Heart right ventricle (tissue), 16 donors: ENCODE measurements at regions of chr9 and their contacts with region 1.

Region 1: GRCh38 chr9:128448746-128449145 is 7.1 kb upstream of the ODF2 start:
- DNase-seq: no peak
- ATAC-seq: no peak
- H3K4me3 ChIP-seq: no peak overlapping the region
- H3K27ac ChIP-seq: no peak overlapping the region
- H3K4me1 ChIP-seq: no peaks in the 10 kb centered on the region
- H3K27me3 ChIP-seq: no peaks in the 10 kb centered on the region
- CTCF ChIP-seq: no peak

Region 2: GRCh38 chr9:128504485-128505413 is 56.0 kb after region 1 on chr9 and contains the start of gene GLE1:
- intact Hi-C with region 1: loop called in 1 of 10 experiments (anchors 2 kb)
- DNase-seq: peak; percentile 94 to 98
- ATAC-seq: peak; percentile 99 to 100 (median 100)
- H3K4me3 ChIP-seq: peak within 1 kb of the TSS; percentile 49 to 99 (median 86)
- H3K27ac ChIP-seq: peak within 1 kb of the TSS in 9 of 10 donors; percentile 77 to 94 (median 84)
- H3K4me1 ChIP-seq: peaks cover 4 to 28% (median 24%) of the 10 kb centered on the region in 9 donors
- H3K27me3 ChIP-seq: no peaks in the 10 kb centered on the region
- CTCF ChIP-seq: no peak
- total RNA-seq, gene GLE1: 15.0 to 24.5 (median 19.9) TPM

Region 3: GRCh38 chr9:128688512-128689292 is 240.0 kb after region 1 on chr9 and contains the start of gene SET:
- intact Hi-C with region 1: no loop called
- DNase-seq: peak; percentile 95 to 97
- ATAC-seq: peak; percentile 88 to 97 (median 94)
- H3K4me3 ChIP-seq: peak within 1 kb of the TSS; percentile 58 to 91 (median 78)
- H3K27ac ChIP-seq: peak within 1 kb of the TSS; percentile 89 to 98 (median 98)
- H3K4me1 ChIP-seq: peaks cover 10 to 57% (median 32%) of the 10 kb centered on the region in 9 donors
- H3K27me3 ChIP-seq: no peaks in the 10 kb centered on the region
- CTCF ChIP-seq: no peak
- total RNA-seq, gene SET: 183 to 228 (median 202) TPM